ENCODE measurements at regions of chr17 and their contacts with region 1.

Region 1: DNA sequence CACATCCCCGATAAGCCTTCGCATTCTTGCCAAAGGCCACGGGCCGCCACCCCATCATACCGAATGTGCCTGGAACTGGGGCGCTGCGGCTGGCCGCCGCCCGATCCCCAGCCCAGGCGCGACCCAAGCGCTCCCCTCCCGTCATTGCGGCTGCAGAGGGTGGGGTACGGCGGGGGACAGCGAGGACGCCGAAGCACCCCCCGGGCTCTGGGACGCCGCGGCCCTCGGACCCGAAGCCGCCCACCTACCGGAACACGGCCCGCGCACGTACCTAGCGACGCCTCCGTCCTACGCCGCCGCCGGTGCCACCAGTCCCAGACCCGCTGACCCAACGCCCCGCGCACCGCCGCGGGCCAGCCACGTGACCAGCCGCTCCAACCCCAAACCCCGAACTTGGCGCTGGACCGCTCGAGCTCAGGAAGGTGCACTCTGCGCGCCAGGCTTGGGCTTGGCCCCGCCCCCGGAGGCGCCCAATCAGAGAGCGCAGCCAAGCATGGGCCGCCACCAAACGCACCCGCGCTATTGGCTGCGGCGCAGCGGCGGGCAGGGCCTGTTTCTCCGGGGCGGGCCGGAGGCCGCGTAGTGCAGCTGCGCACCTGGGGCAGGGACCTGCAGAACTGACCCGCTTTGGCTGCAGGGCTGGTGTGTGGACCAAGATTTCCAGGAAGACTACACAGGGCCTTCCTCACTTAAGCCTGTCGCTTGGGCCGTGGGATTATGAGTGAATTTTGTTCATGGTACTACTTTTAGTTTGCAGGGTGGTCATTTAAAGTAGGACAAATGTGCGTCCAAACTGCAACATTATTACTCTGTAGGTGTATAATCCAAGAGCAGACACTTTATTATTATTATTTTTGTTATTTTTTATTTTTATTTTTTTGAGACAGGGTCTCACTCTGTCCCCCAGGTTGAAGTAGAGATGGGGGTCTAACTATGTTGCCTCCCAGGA is at the start of gene SHMT1:
- DNase-seq: peak; percentile 92
- H3K4me3 ChIP-seq: peak within 1 kb of the TSS; percentile 60 to 86 (median 72)
- H3K27ac ChIP-seq: peak within 1 kb of the TSS; percentile 50
- H3K4me1 ChIP-seq: peaks cover 10% of the 10 kb centered on the region
- H3K27me3 ChIP-seq: no peaks in the 10 kb centered on the region
- CTCF ChIP-seq: no peak
- total RNA-seq, gene SHMT1: 25.3 to 25.6 TPM

Region 2: GRCh38 chr17:18248300-18248731 is 115.1 kb before region 1 on chr17:
- CTCF ChIA-PET with region 1: no interaction called
- dilution Hi-C with region 1: no loop called
- in situ Hi-C with region 1: no loop called
- intact Hi-C with region 1: no loop called
- DNase-seq: peak; percentile 55
- H3K4me3 ChIP-seq: no peak overlapping the region
- H3K27ac ChIP-seq: no peak overlapping the region
- H3K4me1 ChIP-seq: peaks cover 17% of the 10 kb centered on the region
- H3K27me3 ChIP-seq: no peaks in the 10 kb centered on the region
- CTCF ChIP-seq: peak; percentile 72 to 73

Region 3: DNA sequence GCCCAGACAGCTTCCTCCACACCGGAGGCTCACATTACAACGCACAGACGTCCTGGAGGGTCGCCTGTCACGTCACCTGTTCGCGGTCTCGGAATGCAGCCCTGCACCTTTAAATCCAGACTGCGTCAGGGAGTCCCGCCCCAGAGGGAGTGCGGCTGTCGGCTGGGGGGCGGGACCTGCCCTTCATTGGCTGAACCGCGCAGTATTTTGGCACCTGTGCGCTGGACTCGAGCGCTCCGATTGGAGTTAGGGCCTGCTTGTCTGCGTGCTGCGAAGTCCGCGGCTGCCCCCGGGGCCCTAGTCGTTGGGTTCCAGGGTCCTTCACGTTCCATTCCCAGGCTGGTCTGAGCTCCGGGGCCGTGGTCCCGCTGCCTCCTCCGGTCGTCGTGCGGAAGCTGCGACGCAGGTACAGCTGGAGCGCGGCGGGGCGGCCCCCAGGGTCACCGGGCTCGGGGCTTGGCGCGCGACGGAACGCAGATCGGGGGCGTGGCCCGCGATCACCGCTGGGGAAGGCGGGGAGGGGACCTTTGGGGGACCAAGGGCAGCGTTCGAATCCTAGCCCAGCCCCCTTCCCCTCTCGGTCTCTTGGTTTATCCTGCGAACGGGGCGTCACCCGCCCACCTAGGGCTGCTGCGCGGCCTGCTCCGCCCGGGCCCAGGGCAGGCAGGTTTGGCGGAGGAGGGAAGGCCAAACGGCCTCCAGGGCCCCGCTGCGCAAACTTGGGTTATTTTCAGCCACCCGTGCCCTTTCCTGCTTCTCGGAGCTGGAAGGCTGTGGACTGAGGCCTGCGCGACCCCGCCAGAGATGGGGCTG is 102.8 kb before region 1 on chr17 and contains the start of gene MIEF2:
- CTCF ChIA-PET with region 1: interaction called, 14 read pairs
- dilution Hi-C with region 1: no loop called
- in situ Hi-C with region 1: no loop called
- intact Hi-C with region 1: no loop called
- DNase-seq: peak; percentile 93
- H3K4me3 ChIP-seq: peak within 1 kb of the TSS; percentile 91 to 95 (median 93)
- H3K27ac ChIP-seq: peak within 1 kb of the TSS; percentile 92
- H3K4me1 ChIP-seq: peaks cover 43% of the 10 kb centered on the region
- H3K27me3 ChIP-seq: no peaks in the 10 kb centered on the region
- CTCF ChIP-seq: no peak
- total RNA-seq, gene MIEF2: 11.9 to 56.3 TPM

Region 4: GRCh38 chr17:18291718-18292540 is 71.4 kb before region 1 on chr17:
- CTCF ChIA-PET with region 1: no interaction called
- dilution Hi-C with region 1: no loop called
- in situ Hi-C with region 1: no loop called
- intact Hi-C with region 1: no loop called
- DNase-seq: no peak
- H3K4me3 ChIP-seq: no peak overlapping the region
- H3K27ac ChIP-seq: no peak overlapping the region
- H3K4me1 ChIP-seq: no peaks in the 10 kb centered on the region
- H3K27me3 ChIP-seq: no peaks in the 10 kb centered on the region
- CTCF ChIP-seq: no peak

Measured in mammary epithelial cell (primary cell).